ENCODE measurements at regions of chr2 and their contacts with region 1.

Region 1: DNA sequence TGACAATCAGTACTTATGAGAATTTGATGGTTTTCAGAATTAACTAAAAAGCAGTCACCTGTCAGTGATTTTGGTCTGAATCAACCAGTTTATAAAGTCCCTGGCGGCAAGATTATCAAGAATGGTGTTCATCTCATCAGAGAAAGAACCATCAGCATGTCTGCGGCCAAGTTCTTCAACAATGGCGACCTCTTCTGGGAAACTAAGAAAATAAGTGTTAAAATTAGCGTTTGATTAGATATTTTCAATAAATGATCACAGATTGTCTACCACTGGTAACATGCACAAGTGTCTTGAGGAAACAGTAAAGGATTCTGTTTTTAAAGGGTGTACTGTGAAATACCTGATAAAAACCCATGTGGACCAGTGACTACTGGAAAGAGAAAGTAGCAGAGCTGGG is 8.1 kb downstream of the GCG start:
- DNase-seq: peak; percentile 38

Region 2: DNA sequence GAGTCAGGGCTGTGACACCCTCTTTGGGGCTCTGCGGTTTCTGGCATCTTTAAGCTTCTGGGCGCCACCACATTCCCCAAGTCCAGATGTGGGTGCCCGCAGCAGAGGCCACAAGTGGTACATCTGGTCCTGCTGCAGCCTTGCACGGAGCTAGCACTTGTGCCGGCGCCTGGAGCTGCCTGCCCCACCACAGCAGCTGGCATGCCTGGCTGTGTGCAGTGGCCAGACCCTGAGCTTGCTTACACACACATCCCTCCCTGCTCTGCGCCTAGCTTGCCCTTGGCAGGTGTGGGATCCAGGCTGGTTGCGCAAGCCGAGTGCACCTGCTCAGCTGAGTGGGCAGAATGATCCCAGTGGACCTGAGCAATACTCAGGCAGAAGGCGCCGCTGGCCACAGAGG is 492.4 kb before region 1 on chr2:
- in situ Hi-C with region 1: no loop called
- DNase-seq: no peak

Region 3: GRCh38 chr2:161867336-161867735 is 276.6 kb before region 1 on chr2:
- in situ Hi-C with region 1: no loop called
- DNase-seq: no peak

Region 4: GRCh38 chr2:162297925-162298552 is 154.1 kb after region 1 on chr2:
- in situ Hi-C with region 1: loop called (anchors 10 kb)
- DNase-seq: peak; percentile 84